Dorsolateral prefrontal cortex (tissue), 120 donors: ENCODE measurements at regions of chr1 and their contacts with region 1.

Region 1: DNA sequence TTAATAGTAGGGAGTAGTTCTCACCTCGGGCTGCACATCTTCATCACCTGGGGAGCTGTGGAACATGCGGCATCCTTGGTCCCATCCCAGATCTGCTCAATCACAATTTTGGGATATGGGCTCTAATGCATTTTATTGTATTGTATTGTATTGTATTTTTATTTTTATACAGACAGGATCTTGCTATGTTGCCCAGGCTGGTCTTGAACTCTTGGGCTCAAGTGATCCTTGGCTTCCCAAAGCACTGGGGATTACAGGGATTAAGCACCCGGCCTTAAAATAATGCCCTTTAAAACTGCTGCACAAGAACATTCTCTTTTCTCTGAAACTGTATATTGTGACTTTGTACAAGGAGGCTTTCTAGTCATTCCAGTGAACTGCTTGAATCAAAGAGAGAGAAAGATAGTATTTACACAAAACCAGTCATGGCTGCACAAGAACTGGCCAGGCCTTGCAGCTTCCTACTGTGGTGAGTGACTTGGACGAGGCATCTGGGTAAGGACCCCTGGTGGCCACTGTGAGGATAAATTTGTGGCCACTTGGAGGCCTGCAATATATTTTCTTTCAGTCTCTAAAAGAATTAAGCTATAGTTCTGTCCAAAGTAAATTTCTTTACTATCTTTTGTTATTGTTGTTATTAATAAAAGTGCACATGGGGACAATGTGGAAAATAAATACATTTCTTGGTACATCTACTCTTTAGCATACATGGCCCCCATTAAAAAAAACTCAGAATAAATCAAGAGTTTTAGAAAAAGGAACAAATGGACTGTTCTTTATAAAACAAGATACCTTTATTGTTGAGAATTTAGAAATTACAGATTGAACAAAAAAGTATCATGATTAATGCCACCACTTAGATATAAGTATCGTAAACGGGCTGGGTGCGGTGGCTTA is 48.0 kb downstream of the TBCE start:
- DNase-seq: peak in 8 of 10 donors; percentile 20 to 60 (median 50)
- H3K4me3 ChIP-seq: no peak overlapping the region
- H3K27ac ChIP-seq: peak overlapping the region in 28 of 59 donors; percentile 2 to 66 (median 44)
- H3K27me3 ChIP-seq: no peaks in the 10 kb centered on the region
- CTCF ChIP-seq: peak; percentile 56 to 89 (median 76)

Region 2: DNA sequence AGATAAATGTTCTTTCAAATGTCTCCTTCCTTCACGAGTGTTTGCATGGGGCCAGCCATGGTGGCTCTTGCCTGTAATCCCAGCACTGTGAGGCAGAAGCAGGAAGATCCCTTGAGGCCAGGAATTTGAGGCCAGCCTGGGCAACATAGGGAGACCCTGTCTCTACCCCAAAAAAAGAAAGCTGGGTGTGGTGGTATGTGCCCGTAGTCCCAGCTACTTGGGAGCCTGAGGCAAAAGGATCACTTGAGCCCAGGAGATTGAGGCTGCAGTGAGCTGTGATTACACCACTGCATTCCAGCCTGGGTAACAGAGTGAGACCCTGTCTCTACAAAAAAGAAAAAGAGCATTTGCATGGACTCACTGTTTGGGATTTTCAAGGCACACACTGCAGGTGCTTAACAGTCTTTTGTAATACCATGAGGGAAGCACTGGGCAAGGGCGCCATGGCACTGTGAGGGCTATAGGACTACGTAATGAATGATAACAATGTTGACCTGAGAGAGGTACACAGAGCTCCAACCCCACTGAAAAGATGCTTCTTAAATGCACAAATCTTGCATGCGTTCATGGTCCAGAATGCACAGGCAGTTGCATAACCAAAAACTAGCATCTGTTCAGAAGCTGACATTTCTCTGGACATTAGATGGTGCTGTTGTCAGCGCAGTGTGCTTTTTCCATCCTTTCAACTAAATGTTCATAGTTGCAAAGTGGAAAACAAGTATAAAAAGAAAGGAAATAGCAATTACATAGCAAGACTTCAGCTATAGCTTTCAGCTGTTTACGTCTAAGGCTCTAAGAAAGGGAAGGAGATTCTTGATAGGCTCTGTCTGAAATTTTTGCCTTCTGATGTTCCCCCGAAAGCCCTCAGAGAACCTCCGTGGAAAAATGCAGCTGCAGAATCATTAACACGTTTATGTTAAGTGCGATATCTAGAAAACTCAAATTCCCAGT is 928.5 kb before region 1 on chr1:
- intact Hi-C with region 1: loop called (anchors 5 to 10 kb)
- DNase-seq: peak in 5 of 10 donors; percentile 43 to 62 (median 52)
- H3K4me3 ChIP-seq: peak overlapping the region in 46 of 59 donors; percentile 3 to 55 (median 35)
- H3K27ac ChIP-seq: peak overlapping the region in 57 of 59 donors; percentile 10 to 87 (median 69)
- H3K27me3 ChIP-seq: no peaks in the 10 kb centered on the region
- CTCF ChIP-seq: peak; percentile 64 to 89 (median 79)

Region 3: DNA sequence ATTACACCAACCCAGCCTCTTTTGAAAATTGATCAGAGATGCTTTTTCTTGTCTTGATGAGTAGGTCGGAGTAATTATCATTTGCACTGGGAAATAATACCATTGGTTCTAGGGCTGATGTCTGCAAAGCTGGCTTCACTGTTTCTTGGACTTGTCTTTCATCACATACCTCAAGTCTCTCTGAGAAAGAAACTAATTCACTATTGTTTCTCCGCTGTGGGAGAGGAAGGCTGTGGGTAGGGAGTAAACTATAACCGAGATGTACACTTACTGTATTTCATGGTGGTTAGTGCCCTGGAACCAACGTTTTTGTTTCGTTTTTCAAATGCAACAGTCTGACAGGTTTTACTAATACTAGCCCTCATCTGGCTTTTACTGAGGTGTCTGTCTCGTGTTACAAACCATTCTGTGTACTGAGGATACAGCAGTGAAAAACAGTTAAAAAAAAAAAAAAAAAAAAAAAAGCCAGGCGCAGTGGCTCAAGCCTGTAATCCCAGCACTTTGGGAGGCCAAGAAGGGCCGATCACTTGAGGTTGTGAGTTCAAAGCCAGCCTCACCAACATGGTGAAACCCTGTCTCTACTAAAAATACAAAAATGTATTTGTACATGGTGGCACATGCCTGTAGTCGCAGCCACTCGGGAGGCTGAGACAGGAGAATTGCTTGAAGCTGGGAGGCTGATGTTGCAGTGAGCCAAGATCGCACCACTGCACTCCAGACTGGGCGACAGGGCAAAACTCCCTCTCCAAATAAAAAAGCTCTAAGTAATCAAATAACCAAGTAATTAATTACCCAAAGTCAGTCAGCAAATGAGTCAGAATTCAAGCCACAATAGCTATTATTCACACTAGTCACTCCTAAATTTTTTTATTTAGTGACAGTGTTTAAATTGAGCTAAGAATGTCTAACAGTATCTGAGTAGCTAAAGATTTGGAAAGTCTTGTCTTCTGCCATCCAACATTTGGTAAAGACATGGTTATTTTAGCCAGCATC is 309.9 kb before region 1 on chr1:
- intact Hi-C with region 1: loop called (anchors 2 to 5 kb)
- DNase-seq: no peak
- H3K4me3 ChIP-seq: no peak overlapping the region
- H3K27ac ChIP-seq: no peak overlapping the region
- H3K27me3 ChIP-seq: no peaks in the 10 kb centered on the region
- CTCF ChIP-seq: no peak

Region 4: GRCh38 chr1:235253219-235253962 is 161.9 kb before region 1 on chr1:
- intact Hi-C with region 1: loop called (anchors 2 to 5 kb)
- DNase-seq: peak in 7 of 10 donors; percentile 32 to 73 (median 64)
- H3K4me3 ChIP-seq: peak overlapping the region in 1 of 59 donors; percentile 2
- H3K27ac ChIP-seq: peak overlapping the region in 23 of 59 donors; percentile 0 to 67 (median 28)
- H3K27me3 ChIP-seq: no peaks in the 10 kb centered on the region
- CTCF ChIP-seq: peak; percentile 35 to 91 (median 79)

Region 5: GRCh38 chr1:235504496-235505222 is 89.4 kb after region 1 on chr1:
- intact Hi-C with region 1: loop called in 1 of 2 experiments (anchors 5 kb)
- DNase-seq: peak; percentile 98 to 99 (median 99)
- H3K4me3 ChIP-seq: peak overlapping the region; percentile 67 to 95 (median 85)
- H3K27ac ChIP-seq: peak overlapping the region; percentile 72 to 100 (median 97)
- H3K27me3 ChIP-seq: no peaks in the 10 kb centered on the region
- CTCF ChIP-seq: peak; percentile 61 to 99 (median 94)